CD4-positive, alpha-beta memory T cell (primary cell): ENCODE measurements at regions of chr15 and their contacts with region 1.

Region 1: GRCh38 chr15:74950078-74951000 is 6.2 kb downstream of the RPP25 start:
- DNase-seq: peak; percentile 70 to 79 (median 75)
- H3K4me3 ChIP-seq: no peak overlapping the region
- H3K4me3 Mint-ChIP-seq: no peak overlapping the region
- H3K27ac ChIP-seq: no peak overlapping the region
- H3K27ac Mint-ChIP-seq: peak overlapping the region in 1 of 7 donors; percentile 1
- H3K4me1 ChIP-seq: peaks cover 6% of the 10 kb centered on the region
- H3K4me1 Mint-ChIP-seq: peaks cover under 1 to 11% (median 3%) of the 10 kb centered on the region in 4 donors
- H3K27me3 ChIP-seq: no peaks in the 10 kb centered on the region
- H3K27me3 Mint-ChIP-seq: peaks cover 2% of the 10 kb centered on the region in 2 donors

Region 2: GRCh38 chr15:74683758-74684157 is 266.6 kb before region 1 on chr15:
- CTCF ChIA-PET with region 1: no interaction called
- POLR2A ChIA-PET with region 1: no interaction called
- intact Hi-C with region 1: no loop called
- DNase-seq: no peak
- H3K4me3 ChIP-seq: no peak overlapping the region
- H3K4me3 Mint-ChIP-seq: no peak overlapping the region
- H3K27ac ChIP-seq: no peak overlapping the region
- H3K27ac Mint-ChIP-seq: peak overlapping the region in 1 of 7 donors; percentile 70
- H3K4me1 ChIP-seq: no peaks in the 10 kb centered on the region
- H3K4me1 Mint-ChIP-seq: peaks cover 0 to 13% (median 5%) of the 10 kb centered on the region in 4 donors
- H3K27me3 ChIP-seq: no peaks in the 10 kb centered on the region
- H3K27me3 Mint-ChIP-seq: no peaks in the 10 kb centered on the region

Region 3: DNA sequence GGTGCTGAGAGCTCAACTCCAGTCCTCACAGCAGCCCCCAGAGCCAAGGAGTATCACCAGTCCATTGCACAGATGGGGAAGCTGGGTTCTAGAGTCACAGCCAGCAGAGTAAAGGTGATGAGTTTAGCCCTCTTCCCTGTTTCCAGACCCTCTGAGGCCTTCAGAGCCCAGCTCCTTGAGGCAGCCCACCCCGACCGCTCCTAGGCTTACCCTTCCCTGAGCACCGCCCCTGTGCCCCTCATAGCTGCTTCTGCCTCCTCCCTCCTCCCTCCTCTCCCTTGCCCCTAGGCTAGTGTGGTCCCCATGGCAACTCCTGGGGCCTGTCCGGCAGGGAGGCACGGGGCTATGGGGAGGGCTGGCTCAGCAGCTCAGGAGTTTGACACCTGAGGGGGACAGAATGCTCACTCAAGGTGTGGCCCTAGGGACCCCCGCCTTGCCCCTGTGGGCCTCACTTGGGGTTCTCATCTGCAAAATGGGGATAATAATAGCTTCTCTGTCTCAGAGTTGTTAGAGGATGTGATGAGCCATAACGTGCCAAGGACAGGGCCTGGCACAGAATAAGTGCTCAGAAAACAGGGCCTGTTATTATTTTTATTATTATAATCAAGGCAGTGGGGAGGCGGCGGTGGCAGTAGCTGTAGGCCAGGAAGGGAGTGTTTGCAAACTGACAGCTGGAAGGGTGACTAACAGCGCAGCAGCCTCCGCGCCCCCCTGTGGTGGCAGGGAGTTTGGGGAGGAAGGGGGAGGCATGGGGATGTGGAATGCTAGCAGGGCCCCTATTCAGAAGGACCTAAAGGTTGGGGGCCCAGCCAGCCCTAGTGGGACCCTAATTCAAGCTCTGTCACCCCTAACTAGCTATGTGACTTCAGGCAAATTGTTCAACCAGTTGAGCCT is 157.0 kb before region 1 on chr15:
- CTCF ChIA-PET with region 1: interaction called, 15 read pairs
- POLR2A ChIA-PET with region 1: interaction called, 3 read pairs
- intact Hi-C with region 1: no loop called
- DNase-seq: peak; percentile 70 to 83 (median 75)
- H3K4me3 ChIP-seq: peak overlapping the region; percentile 17 to 24
- H3K4me3 Mint-ChIP-seq: peak overlapping the region; percentile 6 to 96 (median 75)
- H3K27ac ChIP-seq: peak overlapping the region; percentile 56
- H3K27ac Mint-ChIP-seq: peak overlapping the region; percentile 80 to 95 (median 90)
- H3K4me1 ChIP-seq: peaks cover 99% of the 10 kb centered on the region
- H3K4me1 Mint-ChIP-seq: peaks cover 61 to 94% (median 77%) of the 10 kb centered on the region in 4 donors
- H3K27me3 ChIP-seq: no peaks in the 10 kb centered on the region
- H3K27me3 Mint-ChIP-seq: no peaks in the 10 kb centered on the region

Region 4: GRCh38 chr15:74799856-74800547 is 150.3 kb before region 1 on chr15:
- CTCF ChIA-PET with region 1: interaction called, 12 read pairs
- POLR2A ChIA-PET with region 1: no interaction called
- intact Hi-C with region 1: loop called (anchors 1 kb)
- DNase-seq: peak; percentile 84 to 89 (median 86)
- H3K4me3 ChIP-seq: no peak overlapping the region
- H3K4me3 Mint-ChIP-seq: peak overlapping the region in 4 of 8 donors; percentile 17 to 65 (median 46)
- H3K27ac ChIP-seq: peak overlapping the region; percentile 84
- H3K27ac Mint-ChIP-seq: peak overlapping the region; percentile 83 to 97 (median 94)
- H3K4me1 ChIP-seq: peaks cover 55% of the 10 kb centered on the region
- H3K4me1 Mint-ChIP-seq: peaks cover 28 to 59% (median 45%) of the 10 kb centered on the region in 4 donors
- H3K27me3 ChIP-seq: no peaks in the 10 kb centered on the region
- H3K27me3 Mint-ChIP-seq: no peaks in the 10 kb centered on the region

Region 5: GRCh38 chr15:74842581-74843444 is 107.5 kb before region 1 on chr15 and contains the start of gene ULK3:
- CTCF ChIA-PET with region 1: interaction called, 10 read pairs
- POLR2A ChIA-PET with region 1: no interaction called
- intact Hi-C with region 1: no loop called
- DNase-seq: peak; percentile 92 to 94 (median 93)
- H3K4me3 ChIP-seq: peak within 1 kb of the TSS; percentile 81 to 83
- H3K4me3 Mint-ChIP-seq: peak within 1 kb of the TSS; percentile 87 to 92 (median 91)
- H3K27ac ChIP-seq: peak within 1 kb of the TSS; percentile 77
- H3K27ac Mint-ChIP-seq: peak within 1 kb of the TSS; percentile 91 to 97 (median 93)
- H3K4me1 ChIP-seq: peaks cover 52% of the 10 kb centered on the region
- H3K4me1 Mint-ChIP-seq: peaks cover 37 to 57% (median 46%) of the 10 kb centered on the region in 4 donors
- H3K27me3 ChIP-seq: no peaks in the 10 kb centered on the region
- H3K27me3 Mint-ChIP-seq: no peaks in the 10 kb centered on the region
- total RNA-seq, gene ULK3: 84.9 to 88.3 TPM

Region 6: GRCh38 chr15:75073197-75073596 is 122.9 kb after region 1 on chr15:
- CTCF ChIA-PET with region 1: no interaction called
- POLR2A ChIA-PET with region 1: no interaction called
- intact Hi-C with region 1: no loop called
- DNase-seq: no peak
- H3K4me3 ChIP-seq: no peak overlapping the region
- H3K4me3 Mint-ChIP-seq: no peak overlapping the region
- H3K27ac ChIP-seq: no peak overlapping the region
- H3K27ac Mint-ChIP-seq: no peak overlapping the region
- H3K4me1 ChIP-seq: peaks cover 8% of the 10 kb centered on the region
- H3K4me1 Mint-ChIP-seq: peaks cover 0 to 30% (median 14%) of the 10 kb centered on the region in 4 donors
- H3K27me3 ChIP-seq: no peaks in the 10 kb centered on the region
- H3K27me3 Mint-ChIP-seq: no peaks in the 10 kb centered on the region